Endothelial cell of umbilical vein (primary cell): ENCODE measurements at regions of chr11 and their contacts with region 1.

Region 1: DNA sequence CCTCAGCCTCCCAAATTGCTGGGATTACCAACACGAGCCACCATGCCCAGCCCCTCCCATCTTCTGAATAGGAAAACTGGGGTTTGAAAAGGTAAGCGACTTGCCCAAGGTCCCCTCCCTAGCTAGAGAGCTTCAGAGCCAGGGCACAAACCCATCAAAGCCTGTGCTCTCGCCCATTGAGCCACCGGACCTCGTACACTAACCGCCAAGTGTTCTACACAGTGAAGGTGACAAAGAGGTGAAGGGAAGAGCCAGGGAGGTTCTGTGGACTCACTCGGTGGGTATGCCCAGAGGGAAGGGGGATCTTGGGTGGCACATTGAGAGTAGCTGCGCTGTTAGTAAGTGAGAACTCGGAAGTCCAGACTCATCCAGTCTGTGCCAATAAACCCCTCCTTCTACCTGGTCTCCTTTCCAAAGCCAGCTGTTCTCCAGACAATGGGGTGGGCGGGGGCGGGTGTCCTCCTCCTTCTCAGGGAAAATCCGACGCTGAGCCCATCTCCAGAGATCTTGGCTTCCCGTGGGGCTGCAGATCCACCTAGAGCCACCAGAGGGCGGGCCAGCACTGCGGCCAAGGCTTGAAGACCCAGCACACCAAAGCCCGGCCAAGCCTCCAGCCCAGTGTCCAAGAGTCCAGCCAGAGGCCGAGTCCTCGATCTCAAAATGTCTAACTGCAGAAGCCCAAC is 3.2 kb upstream of the RTN4RL2 start:
- DNase-seq: peak; percentile 79
- H3K4me3 ChIP-seq: no peak overlapping the region
- H3K27ac ChIP-seq: no peak overlapping the region
- H3K4me1 ChIP-seq: peaks cover 14% of the 10 kb centered on the region
- H3K27me3 ChIP-seq: peaks cover 29 to 39% of the 10 kb centered on the region in 2 experiments
- CTCF ChIP-seq: peak; percentile 92 to 99
- POLR2A ChIP-seq: no peak

Region 2: DNA sequence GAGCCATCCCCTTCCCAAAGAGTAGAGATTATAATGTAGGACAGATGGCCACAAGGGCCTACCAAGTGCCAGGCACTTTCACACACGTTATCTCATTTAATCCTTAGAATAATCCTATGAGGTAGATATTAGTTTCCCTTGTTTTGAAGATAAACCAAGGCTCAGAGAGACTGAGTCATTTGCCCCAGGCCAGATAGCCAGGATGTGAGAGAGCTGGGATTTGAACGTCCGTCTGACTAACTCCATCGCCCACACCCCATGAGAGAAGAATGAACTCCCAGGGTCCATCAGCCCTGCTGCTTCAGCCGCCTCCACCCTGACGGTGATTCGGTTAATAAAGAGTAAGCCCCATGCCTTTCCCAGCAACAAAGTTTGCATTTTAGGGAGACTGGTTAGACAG is 86.8 kb before region 1 on chr11:
- CTCF ChIA-PET with region 1: interaction called, 12 read pairs
- POLR2A ChIA-PET with region 1: no interaction called
- dilution Hi-C with region 1: no loop called
- intact Hi-C with region 1: no loop called
- DNase-seq: no peak
- H3K4me3 ChIP-seq: no peak overlapping the region
- H3K27ac ChIP-seq: no peak overlapping the region
- H3K4me1 ChIP-seq: no peaks in the 10 kb centered on the region
- H3K27me3 ChIP-seq: peaks cover 0 to 2% of the 10 kb centered on the region in 2 experiments
- CTCF ChIP-seq: no peak
- POLR2A ChIP-seq: no peak

Region 3: DNA sequence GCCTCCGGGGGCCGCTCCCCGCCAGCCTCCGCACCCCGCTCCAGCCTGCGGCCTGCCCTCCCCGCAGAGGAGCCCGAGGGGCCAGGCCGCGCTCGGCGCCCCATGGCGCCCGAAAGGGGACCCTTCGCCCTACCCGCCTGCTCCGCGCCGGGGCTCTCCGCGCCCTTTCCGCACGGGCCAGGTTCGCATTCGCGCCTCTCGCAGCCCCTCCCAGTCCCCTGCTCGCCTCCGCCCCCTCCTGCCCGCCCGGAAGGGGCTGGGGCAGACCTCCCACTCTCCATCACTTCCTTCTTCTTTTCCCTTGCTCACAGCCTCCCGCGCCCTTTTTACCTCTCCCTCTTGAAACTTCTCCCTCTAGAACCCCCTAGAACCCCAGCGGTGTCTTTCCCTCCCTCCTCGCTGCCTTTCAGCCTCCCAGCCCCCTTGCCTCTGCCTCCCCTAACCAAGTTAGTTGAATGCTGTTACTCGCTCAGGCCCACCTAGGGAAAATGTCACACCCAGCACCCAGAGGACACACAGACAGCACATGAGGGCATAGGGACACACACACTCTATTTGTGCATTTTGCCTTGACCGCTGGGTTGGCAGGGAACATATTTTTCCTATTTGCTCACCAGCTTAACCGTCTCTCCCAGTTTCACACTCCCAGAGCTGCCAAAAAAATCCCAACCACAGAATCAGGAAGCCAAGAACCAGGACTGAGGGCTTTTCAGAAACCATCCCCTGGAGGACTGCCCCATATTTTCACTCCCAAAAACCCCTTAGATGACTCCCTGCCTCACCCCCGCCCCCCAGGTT is 30.0 kb before region 1 on chr11 and contains the start of gene SLC43A3:
- CTCF ChIA-PET with region 1: interaction called, 24 read pairs
- POLR2A ChIA-PET with region 1: no interaction called
- dilution Hi-C with region 1: no loop called
- intact Hi-C with region 1: loop called (anchors 1 kb)
- DNase-seq: peak; percentile 38
- H3K4me3 ChIP-seq: peak within 1 kb of the TSS; percentile 47 to 68 (median 59)
- H3K27ac ChIP-seq: peak within 1 kb of the TSS; percentile 81
- H3K4me1 ChIP-seq: peaks cover 33% of the 10 kb centered on the region
- H3K27me3 ChIP-seq: peaks cover 4 to 5% of the 10 kb centered on the region in 2 experiments
- CTCF ChIP-seq: no peak
- POLR2A ChIP-seq: peak; percentile 80
- total RNA-seq, gene SLC43A3: 68.9 and 89.4 TPM in 2 replicates

Region 4: DNA sequence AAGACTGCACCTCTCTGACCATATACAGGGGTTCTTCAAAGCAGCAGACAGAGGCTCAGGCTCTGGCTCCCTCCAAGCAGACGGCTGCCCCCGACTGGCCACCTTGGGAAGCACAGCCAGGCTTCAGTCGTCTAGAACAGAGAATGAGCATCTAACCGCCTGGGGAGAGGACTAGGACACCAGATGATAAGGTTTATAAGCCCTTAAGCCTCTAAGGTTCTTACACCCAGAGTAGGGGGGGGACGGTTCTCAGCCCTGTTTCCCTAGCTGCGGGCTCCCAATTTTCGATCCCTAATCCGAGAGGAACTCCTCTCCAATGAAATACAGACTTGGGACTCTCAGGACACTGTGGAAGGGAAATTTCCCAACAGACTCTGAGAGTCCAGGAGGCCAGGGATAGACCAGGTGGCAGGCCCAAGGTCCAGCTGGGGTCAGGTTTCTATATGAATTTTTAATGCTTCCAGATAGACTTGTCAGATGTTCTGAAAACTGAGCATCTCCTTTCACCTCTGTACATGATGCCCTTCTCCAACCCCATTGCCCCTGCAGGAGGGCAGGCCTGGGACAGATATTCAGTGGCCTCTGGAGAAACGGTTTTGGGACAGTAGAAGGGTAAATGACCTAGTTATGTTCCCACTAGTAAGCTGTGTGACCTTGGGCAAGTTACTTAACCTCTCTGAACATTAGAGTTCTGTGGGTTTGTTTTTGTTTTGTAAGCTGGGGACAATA is 23.5 kb after region 1 on chr11:
- CTCF ChIA-PET with region 1: interaction called, 152 read pairs
- POLR2A ChIA-PET with region 1: no interaction called
- dilution Hi-C with region 1: no loop called
- intact Hi-C with region 1: loop called (anchors 1 kb)
- DNase-seq: peak; percentile 46
- H3K4me3 ChIP-seq: no peak overlapping the region
- H3K27ac ChIP-seq: no peak overlapping the region
- H3K4me1 ChIP-seq: peaks cover 9% of the 10 kb centered on the region
- H3K27me3 ChIP-seq: peaks cover 7 to 28% of the 10 kb centered on the region in 2 experiments
- CTCF ChIP-seq: peak; percentile 75 to 85
- POLR2A ChIP-seq: no peak

Region 5: GRCh38 chr11:57530596-57531507 is 73.8 kb after region 1 on chr11 and contains the start of gene TIMM10:
- CTCF ChIA-PET with region 1: interaction called, 105 read pairs
- POLR2A ChIA-PET with region 1: no interaction called
- dilution Hi-C with region 1: no loop called
- intact Hi-C with region 1: loop called (anchors 1 kb)
- DNase-seq: peak; percentile 96
- H3K4me3 ChIP-seq: peak within 1 kb of the TSS; percentile 53 to 74 (median 69)
- H3K27ac ChIP-seq: peak within 1 kb of the TSS; percentile 48
- H3K4me1 ChIP-seq: peaks cover 21% of the 10 kb centered on the region
- H3K27me3 ChIP-seq: peaks cover 0 to 2% of the 10 kb centered on the region in 2 experiments
- CTCF ChIP-seq: no peak
- POLR2A ChIP-seq: peak; percentile 45
- total RNA-seq, gene TIMM10: 64.2 and 105 TPM in 2 replicates

Region 6: GRCh38 chr11:58513747-58514367 is 1056.8 kb after region 1 on chr11:
- CTCF ChIA-PET with region 1: interaction called, 8 read pairs
- POLR2A ChIA-PET with region 1: no interaction called
- dilution Hi-C with region 1: no loop called
- intact Hi-C with region 1: loop called (anchors 1 kb)
- DNase-seq: peak; percentile 73
- H3K4me3 ChIP-seq: no peak overlapping the region
- H3K27ac ChIP-seq: no peak overlapping the region
- H3K4me1 ChIP-seq: no peaks in the 10 kb centered on the region
- H3K27me3 ChIP-seq: peaks cover 18 to 32% of the 10 kb centered on the region in 2 experiments
- CTCF ChIP-seq: peak; percentile 57 to 68
- POLR2A ChIP-seq: no peak